Right cardiac atrium (tissue), 5 donors: ENCODE measurements at regions of chr1 and their contacts with region 1.

Region 1: DNA sequence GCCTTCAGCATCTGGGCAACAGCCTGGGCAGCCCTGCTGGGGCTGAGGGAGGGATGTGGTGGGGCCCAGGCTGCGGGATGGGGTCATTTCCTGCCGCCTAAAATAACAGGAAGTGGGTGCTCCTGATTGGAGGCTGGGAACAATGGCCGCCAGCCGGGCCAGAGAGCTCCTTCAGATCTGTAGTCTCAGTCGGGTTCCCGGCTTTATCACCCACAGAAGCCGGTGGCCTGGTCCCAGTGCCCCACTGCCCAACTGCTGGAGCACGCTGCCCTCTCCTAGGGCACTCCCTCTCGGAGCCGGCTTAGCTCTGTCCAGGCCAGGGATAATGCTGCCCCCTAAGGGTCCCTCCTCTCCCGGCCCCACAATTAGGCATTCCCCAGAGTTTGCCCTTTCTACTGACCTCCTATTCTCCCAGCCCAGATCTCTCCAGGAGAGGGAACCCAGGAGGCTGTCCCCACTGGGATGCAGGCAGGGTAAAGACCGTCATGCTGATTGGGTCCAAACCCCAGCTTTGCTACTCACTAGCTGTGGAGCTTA is 5.1 kb downstream of the MAP7D1 start:
- DNase-seq: peak; percentile 77 to 90 (median 86)
- ATAC-seq: peak; percentile 54 to 75
- H3K4me3 ChIP-seq: peak overlapping the region; percentile 55
- H3K27ac ChIP-seq: peak overlapping the region; percentile 94
- H3K4me1 ChIP-seq: peaks cover 29% of the 10 kb centered on the region
- H3K27me3 ChIP-seq: no peaks in the 10 kb centered on the region

Region 2: DNA sequence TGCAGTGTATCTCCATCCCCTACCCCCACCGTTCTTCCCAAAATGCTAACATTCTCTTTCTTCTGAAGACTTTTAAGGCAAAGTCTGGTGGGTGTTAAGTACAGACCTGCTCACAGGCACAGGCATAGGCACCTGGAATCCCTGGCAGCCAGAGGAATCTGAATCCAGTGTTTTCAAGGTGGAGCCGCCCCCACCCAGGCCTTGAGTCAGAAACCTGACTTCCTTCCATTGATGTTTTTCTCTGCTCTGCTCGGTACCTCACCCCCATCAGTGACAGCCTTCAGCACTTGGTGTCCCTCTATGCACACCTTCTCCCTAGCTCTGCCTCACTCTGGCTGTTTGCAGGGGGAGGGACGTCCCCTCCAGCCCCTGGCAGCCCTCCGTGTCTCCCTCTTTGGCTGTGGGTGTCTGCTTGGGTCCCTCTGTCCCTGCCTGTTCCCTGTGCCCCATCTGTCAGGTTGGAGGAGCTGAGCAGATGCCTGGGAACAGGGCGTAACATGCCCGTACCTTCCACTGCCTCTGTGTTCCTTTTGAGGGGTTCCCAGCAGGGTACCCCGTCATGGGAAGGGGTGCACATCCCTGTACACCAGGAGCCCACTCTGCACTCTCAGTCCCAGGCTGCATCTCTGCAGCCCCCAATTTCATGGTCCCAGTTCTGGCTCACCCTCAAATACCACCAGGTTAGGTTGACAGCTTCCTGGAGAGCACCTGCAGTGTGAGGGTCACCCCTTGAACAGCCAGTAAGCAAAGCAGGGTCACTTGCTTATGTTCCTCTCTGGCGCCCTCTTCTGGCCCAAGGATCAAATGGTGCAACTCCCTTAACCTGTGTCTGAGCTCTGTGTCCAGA is 596.8 kb before region 1 on chr1:
- intact Hi-C with region 1: no loop called
- DNase-seq: peak; percentile 76 to 91 (median 86)
- ATAC-seq: peak; percentile 35 to 49
- H3K4me3 ChIP-seq: no peak overlapping the region
- H3K27ac ChIP-seq: no peak overlapping the region
- H3K4me1 ChIP-seq: no peaks in the 10 kb centered on the region
- H3K27me3 ChIP-seq: no peaks in the 10 kb centered on the region

Region 3: DNA sequence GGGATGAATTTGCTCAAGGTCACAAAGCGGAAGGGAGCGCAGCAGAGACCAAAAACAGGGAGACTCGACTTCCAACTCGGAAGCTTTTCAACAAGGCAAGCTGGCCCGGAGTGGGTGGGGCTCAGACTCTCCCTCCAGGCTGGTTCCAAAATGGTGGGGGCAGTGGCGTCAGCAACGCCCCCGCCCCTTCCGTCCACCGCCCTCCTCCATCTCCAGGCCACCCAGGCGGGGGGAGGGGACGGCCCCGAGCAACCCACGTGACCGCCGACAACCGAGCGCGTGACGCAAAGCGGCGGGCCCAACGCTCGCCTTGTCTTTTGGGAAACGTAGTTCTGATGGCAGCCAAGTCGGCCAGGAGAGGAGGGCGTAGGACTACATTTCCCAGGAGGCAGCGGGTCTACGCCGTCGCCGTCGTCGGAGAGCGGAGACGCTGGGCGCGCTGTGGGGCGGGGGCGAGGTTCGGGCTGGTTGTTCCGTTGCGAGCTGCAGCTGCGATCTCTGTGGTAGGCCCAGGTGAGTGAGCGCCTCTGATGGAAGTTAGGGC is 63.0 kb after region 1 on chr1 and contains the start of gene THRAP3:
- intact Hi-C with region 1: loop called in 1 of 4 experiments (anchors 2 kb)
- DNase-seq: peak; percentile 99 to 100 (median 100)
- ATAC-seq: peak; percentile 98 to 99
- H3K4me3 ChIP-seq: peak within 1 kb of the TSS; percentile 60
- H3K27ac ChIP-seq: peak within 1 kb of the TSS; percentile 98
- H3K4me1 ChIP-seq: no peaks in the 10 kb centered on the region
- H3K27me3 ChIP-seq: no peaks in the 10 kb centered on the region
- total RNA-seq, gene THRAP3: 66.3 to 85.5 (median 77.3) TPM

Region 4: DNA sequence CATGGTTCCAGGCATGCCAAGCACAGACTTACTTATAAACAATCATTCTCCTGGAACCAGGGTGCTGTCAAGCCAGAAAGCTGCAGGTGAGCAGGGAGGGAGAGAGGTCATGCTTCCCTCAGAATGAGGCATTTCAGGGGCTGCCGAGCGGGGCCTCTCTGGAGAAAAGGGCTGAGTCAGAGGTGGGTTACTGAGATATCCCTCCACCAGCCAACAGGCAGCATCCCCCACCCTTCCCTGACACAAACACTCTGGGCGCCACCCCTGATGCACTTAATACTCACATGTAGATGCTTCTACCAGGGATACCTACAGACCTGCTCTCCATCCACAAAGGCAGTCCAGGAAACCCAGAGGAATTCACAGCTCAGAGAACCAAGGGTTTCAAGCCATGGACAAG is 211.6 kb after region 1 on chr1:
- intact Hi-C with region 1: no loop called
- DNase-seq: peak in 1 of 3 donors; percentile 44
- ATAC-seq: no peak
- H3K4me3 ChIP-seq: no peak overlapping the region
- H3K27ac ChIP-seq: peak overlapping the region; percentile 97
- H3K4me1 ChIP-seq: peaks cover 22% of the 10 kb centered on the region
- H3K27me3 ChIP-seq: no peaks in the 10 kb centered on the region

Region 5: DNA sequence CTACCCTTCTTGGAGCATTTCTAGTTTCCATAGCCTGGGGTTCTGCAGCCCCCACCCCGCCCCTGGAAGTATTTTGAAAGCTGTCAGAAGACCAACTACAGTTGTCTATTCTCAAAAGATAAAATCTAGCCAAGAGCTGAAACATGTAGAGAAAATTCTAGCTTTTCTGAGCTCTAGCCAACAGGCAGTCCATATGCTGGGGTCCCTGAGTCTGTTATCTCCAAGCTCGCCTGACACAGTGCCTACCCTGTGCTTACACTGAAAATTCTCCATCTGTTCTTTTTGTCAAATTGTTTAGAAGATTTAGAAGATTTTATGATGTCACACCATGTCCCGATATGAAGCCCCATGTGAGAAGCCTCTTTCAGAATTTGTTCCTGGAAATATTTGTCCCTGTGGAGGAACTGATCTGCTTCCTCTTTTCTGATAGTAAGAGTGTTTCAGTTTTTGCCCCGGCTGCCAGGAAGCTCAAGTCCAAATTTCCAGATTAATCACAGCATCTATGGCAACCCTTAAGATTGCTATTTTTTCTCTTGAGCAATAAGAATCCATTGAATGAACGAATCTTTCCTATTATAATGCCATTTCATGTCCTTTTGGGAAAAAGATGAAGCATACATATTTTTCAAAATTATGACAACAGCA is 345.4 kb after region 1 on chr1:
- intact Hi-C with region 1: no loop called
- DNase-seq: no peak
- ATAC-seq: no peak
- H3K4me3 ChIP-seq: no peak overlapping the region
- H3K27ac ChIP-seq: no peak overlapping the region
- H3K4me1 ChIP-seq: no peaks in the 10 kb centered on the region
- H3K27me3 ChIP-seq: no peaks in the 10 kb centered on the region